Psoas muscle (tissue), 8 donors: ENCODE measurements at regions of chr1 and their contacts with region 1.

Region 1: DNA sequence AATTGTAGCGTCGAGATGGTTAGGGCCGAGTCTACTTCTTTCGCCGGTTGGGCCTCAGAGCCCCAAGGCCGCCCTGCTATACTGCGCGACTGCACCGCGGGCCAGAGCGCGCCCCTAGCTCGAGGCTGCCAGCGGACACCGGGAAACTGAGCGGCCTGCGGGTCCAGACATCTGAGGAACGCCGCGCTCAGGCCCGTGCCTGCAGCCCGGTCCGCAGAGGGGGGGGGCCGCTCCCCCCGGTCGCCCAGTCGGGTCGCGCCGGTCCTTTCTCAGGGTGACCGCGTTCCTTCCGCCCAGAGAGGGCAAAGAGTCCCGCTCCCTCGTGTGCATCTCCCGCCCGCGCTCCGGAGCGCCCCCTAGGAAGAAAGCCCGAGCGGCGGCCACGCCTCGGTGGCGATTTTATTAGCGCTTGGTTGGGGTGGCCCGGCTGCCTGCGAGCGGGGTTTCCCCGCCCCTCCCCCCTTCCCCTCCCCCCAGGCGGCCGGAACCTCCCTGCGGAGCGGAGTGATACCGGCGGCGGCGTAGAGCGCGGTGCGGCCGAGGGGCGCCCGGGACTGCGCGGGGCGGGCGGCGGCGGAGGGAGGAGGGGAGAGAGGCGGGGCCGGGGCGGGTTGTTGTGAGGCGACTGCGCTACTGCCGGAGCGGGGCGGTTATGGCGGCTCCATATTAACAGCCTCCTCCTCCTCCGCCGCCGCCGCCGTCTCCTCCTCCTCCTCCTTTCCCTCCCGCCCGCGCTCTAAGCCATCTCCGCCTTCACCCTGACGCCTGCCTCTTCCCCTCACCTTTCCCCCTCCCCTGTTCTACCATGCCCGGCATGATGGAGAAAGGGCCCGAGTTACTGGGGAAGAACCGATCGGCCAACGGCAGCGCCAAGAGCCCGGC is at the start of gene RCOR3:
- DNase-seq: peak; percentile 96 to 97
- ATAC-seq: peak; percentile 85 to 89 (median 86)
- H3K4me3 ChIP-seq: peak within 1 kb of the TSS; percentile 87
- H3K27ac ChIP-seq: peak within 1 kb of the TSS; percentile 92
- H3K4me1 ChIP-seq: peaks cover 19% of the 10 kb centered on the region
- H3K27me3 ChIP-seq: no peaks in the 10 kb centered on the region
- CTCF ChIP-seq: peak; percentile 60
- total RNA-seq, gene RCOR3: 67.4 to 95.7 (median 72.0) TPM

Region 2: DNA sequence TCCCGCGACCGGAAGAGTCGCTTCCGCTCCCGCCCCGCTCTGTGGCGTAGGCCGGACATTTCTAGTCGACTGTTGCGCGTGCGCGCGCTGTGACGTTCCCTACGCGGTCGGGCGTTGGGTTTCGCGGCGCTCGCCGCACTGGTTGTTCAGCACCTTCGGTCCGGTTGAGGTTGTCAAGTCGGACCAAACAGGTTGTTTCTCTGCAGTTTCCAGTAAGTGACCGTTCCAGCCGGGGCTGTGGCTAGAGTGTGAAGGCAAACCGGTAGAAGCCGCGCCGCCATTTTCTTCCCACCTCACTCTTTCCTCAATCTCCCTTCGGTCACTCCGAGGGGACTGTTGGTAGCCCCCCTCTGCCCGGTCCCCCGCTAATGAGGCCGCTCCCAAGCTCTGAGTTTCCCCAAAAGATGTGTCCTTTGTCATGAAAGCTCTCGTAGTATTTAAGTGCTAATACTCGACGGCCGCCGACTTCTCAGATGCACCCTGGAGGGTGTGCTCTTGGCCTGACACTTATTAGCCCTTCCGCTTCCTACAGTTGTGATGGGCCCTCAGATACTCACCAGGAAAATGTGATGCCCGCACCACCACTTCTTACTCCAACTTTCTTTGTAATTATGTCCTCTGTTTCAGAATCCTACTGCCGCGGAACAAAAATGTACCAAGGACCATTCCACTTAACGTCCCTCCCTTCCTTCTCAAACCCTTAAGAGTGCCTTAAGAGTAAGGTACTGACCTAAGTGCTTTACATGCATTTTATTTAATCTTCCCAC is 123.9 kb after region 1 on chr1:
- intact Hi-C with region 1: loop called in 1 of 2 experiments (anchors 10 kb)
- DNase-seq: peak; percentile 94 to 97
- ATAC-seq: peak; percentile 99 to 100 (median 100)
- H3K4me3 ChIP-seq: peak overlapping the region; percentile 74
- H3K27ac ChIP-seq: peak overlapping the region; percentile 90
- H3K4me1 ChIP-seq: peaks cover 5% of the 10 kb centered on the region
- H3K27me3 ChIP-seq: no peaks in the 10 kb centered on the region
- CTCF ChIP-seq: no peak

Region 3: GRCh38 chr1:211537253-211537652 is 278.3 kb after region 1 on chr1:
- intact Hi-C with region 1: no loop called
- DNase-seq: no peak
- ATAC-seq: no peak
- H3K4me3 ChIP-seq: no peak overlapping the region
- H3K27ac ChIP-seq: no peak overlapping the region
- H3K4me1 ChIP-seq: peaks cover 2% of the 10 kb centered on the region
- H3K27me3 ChIP-seq: no peaks in the 10 kb centered on the region
- CTCF ChIP-seq: no peak